Activated T-helper 1 cell treated with anti-CD3 and anti-CD28 coated beads, Interleukin-12 subunit alpha, Interleukin-12 subunit beta, Interleukin-2, Interleukin-4 antibody, amounts not matched to agents 30 ng/mL and 10 ng/mL and 1 ng/mL, durations not matched to agents 14 hours and 24 hours and 36 hours (primary cell): ENCODE measurements at regions of chr20 and their contacts with region 1.

Region 1: GRCh38 chr20:14860410-14860814 is 523.0 kb upstream of the FLRT3 start:
- DNase-seq: no peak
- H3K4me3 Mint-ChIP-seq: no peak overlapping the region
- H3K27ac Mint-ChIP-seq: no peak overlapping the region
- H3K4me1 Mint-ChIP-seq: no peaks in the 10 kb centered on the region
- H3K27me3 Mint-ChIP-seq: no peaks in the 10 kb centered on the region

Region 2: GRCh38 chr20:14951707-14952418 is 91.5 kb after region 1 on chr20:
- intact Hi-C with region 1: loop called (anchors 5 kb)
- DNase-seq: no peak
- H3K4me3 Mint-ChIP-seq: no peak overlapping the region
- H3K27ac Mint-ChIP-seq: no peak overlapping the region
- H3K4me1 Mint-ChIP-seq: no peaks in the 10 kb centered on the region
- H3K27me3 Mint-ChIP-seq: no peaks in the 10 kb centered on the region